ENCODE measurements at regions of chr5 and their contacts with region 1.

Region 1: GRCh38 chr5:80975065-80975464 is 14.9 kb downstream of the RASGRF2 start:
- DNase-seq: no peak
- ATAC-seq: peak; percentile 38; the same call in 1 of the 2 replicates
- H3K4me3 ChIP-seq: no peak overlapping the region
- H3K27ac ChIP-seq: 0 out of 2 replicates have a peak overlapping the region, but pooled peaks have one; percentile 23
- H3K4me1 ChIP-seq: no peaks in the 10 kb centered on the region
- H3K27me3 ChIP-seq: no peaks in the 10 kb centered on the region
- CTCF ChIP-seq: no peak

Region 2: DNA sequence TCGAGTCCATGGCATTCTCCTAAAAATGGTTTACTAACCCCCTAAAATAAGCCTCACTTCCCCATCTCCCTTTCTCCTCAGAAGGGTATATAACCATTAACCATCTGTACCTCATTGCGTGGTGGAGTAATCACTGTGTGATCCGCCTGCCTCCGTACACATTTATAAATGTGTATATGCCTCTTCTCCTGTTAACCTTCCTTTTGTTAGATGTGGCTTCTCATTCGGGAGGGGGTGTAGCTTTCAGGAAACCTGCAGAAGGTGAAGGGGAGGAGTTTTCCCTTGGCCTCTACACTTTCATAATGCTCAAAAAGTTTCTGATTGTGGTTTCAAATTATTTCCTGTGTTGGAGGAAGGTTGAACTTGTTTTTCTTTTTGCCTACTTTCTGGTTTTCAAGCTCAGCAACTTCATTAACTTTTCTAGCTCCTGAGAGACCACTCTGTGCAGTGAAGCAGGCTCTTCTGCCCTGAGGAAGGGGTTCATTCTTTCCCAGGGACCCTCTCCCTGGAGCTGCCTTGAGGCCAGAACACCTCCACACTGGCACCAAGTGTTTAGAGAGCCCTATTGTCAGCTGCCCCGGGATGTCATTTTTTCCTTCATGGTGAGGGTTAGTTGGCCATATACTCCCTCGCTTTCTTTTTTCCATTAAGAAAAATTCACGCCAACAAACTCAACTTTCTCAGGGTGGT is 32.0 kb after region 1 on chr5:
- CTCF ChIA-PET with region 1: no interaction called
- POLR2A ChIA-PET with region 1: interaction called, 10 read pairs
- in situ Hi-C with region 1: no loop called
- intact Hi-C with region 1: no loop called
- DNase-seq: no peak
- ATAC-seq: no peak
- H3K4me3 ChIP-seq: no peak overlapping the region
- H3K27ac ChIP-seq: no peak overlapping the region
- H3K4me1 ChIP-seq: no peaks in the 10 kb centered on the region
- H3K27me3 ChIP-seq: no peaks in the 10 kb centered on the region
- CTCF ChIP-seq: no peak

Region 3: DNA sequence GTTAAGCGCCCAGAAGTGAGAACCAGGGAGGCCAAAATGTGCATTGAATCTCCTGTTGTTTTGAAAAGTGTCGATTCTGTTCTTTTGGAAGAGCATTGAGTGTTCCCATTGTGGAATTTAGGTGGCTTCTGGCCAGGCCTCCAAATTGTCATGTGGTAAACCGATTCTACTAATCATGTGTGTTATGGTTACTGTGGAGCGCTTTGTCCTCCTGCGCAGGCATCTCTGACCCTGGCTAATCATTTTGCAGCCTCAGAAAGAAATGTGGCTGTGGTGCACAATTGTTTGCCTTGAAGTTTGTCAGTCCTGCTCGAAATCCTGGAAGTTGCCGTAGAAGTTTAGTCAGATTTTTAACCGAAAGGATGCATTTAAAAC is 106.4 kb after region 1 on chr5:
- CTCF ChIA-PET with region 1: no interaction called
- POLR2A ChIA-PET with region 1: no interaction called
- in situ Hi-C with region 1: no loop called
- intact Hi-C with region 1: no loop called
- DNase-seq: no peak
- ATAC-seq: no peak
- H3K4me3 ChIP-seq: no peak overlapping the region
- H3K27ac ChIP-seq: no peak overlapping the region
- H3K4me1 ChIP-seq: no peaks in the 10 kb centered on the region
- H3K27me3 ChIP-seq: no peaks in the 10 kb centered on the region
- CTCF ChIP-seq: no peak

Measured in Panc1 (cell line).